ENCODE measurements at regions of chr15 and their contacts with region 1.

Region 1: DNA sequence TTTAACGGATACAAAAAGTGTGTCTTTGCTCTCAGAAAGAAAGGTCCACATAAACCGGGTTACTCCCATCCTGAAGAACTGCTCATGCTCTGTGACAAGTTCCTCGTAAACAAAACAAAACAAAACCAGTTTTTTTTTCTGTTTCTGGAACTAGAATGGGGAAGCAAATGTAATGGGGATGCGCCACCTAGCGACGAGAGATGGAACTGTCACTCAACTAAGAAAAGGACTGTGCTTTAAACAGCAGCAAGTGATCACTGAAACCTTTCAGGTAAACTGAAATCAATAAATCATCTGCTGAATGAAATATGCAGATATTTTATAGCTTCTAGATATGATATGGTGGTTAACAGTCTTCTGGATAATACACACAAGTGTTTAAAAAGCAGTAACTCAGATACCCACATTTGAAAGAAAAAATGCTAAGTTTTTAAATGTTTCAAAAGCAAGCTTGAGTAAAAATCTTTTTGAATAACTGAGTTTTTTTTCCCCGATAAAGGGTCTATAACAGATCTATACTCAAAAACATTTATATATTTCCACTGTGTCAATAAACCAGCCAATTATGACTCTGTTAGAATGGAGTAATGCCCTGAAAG is 10.9 kb downstream of the TM2D3 start:
- DNase-seq: peak; percentile 80
- ATAC-seq: peak; percentile 66

Region 2: DNA sequence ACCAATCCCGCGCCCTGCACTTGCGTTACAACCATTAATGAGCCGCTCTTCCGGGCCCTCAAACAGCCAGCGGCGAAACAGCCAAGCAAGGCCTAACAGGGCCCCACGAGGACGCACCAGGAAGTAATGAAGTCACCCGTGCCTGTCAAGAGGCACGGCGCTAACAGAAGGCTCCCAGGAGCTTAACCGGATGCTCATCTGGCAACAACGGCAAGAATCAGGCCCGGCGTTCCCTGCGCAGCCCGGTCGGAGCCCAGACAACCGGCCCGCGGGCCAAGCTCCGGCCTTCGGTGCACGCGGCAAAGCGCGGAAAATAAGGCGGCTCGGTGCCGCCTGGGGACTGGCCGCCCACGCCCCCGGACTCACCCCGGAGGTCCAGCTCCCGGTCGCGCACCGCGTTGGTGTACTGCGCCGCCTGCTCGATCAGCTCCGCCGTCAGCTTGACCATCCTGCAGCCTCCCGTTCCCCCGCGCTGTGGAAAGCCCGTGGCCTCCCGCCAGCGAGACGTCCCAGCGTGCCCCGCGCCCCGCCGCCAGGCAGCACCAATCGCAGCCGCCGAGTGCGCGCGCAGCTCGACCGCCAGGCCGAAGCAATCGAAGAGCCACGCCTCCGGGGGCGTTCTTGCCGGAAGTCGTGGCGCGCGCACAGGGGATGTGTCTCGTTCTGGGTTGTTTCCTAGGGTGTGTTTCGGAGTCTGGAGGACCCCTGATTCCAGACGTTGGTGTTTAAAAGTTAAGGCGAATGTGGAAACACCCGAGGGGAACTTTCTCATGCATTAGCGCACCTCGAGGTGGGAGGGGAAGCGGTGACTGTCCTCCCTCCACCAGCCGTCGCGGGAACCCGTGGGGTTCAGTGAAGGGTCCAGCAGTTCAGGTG is 346.3 kb before region 1 on chr15 and contains the start of gene SNRPA1:
- intact Hi-C with region 1: loop called (anchors 2 kb)
- DNase-seq: peak; percentile 100
- ATAC-seq: peak; percentile 96
- total RNA-seq, gene SNRPA1: 30.4 TPM

Region 3: GRCh38 chr15:101540480-101541239 is 100.6 kb before region 1 on chr15:
- intact Hi-C with region 1: loop called (anchors 2 kb)
- DNase-seq: no peak
- ATAC-seq: peak; percentile 64

Region 4: GRCh38 chr15:101578437-101578894 is 62.8 kb before region 1 on chr15:
- intact Hi-C with region 1: loop called (anchors 5 kb)
- DNase-seq: no peak
- ATAC-seq: peak; percentile 42

Measured in Right ventricle myocardium inferior (tissue), 1 donor.